Dorsolateral prefrontal cortex (tissue), 120 donors: ENCODE measurements at regions of chr21 and their contacts with region 1.

Region 1: GRCh38 chr21:33542640-33543504 is at the start of gene SON:
- DNase-seq: peak; percentile 99 to 100 (median 99)
- H3K4me3 ChIP-seq: peak within 1 kb of the TSS; percentile 63 to 95 (median 85)
- H3K27ac ChIP-seq: peak within 1 kb of the TSS; percentile 97 to 100 (median 100)
- H3K27me3 ChIP-seq: no peaks in the 10 kb centered on the region
- CTCF ChIP-seq: peak in 12 of 56 donors; percentile 3 to 29 (median 14)
- total RNA-seq, gene SON: 177 to 330 (median 263) TPM

Region 2: GRCh38 chr21:33380483-33380998 is 162.3 kb before region 1 on chr21:
- intact Hi-C with region 1: no loop called
- DNase-seq: peak; percentile 52 to 94 (median 84)
- H3K4me3 ChIP-seq: peak overlapping the region in 7 of 59 donors; percentile 1 to 18 (median 11)
- H3K27ac ChIP-seq: peak overlapping the region in 37 of 59 donors; percentile 4 to 85 (median 49)
- H3K27me3 ChIP-seq: no peaks in the 10 kb centered on the region
- CTCF ChIP-seq: no peak

Region 3: DNA sequence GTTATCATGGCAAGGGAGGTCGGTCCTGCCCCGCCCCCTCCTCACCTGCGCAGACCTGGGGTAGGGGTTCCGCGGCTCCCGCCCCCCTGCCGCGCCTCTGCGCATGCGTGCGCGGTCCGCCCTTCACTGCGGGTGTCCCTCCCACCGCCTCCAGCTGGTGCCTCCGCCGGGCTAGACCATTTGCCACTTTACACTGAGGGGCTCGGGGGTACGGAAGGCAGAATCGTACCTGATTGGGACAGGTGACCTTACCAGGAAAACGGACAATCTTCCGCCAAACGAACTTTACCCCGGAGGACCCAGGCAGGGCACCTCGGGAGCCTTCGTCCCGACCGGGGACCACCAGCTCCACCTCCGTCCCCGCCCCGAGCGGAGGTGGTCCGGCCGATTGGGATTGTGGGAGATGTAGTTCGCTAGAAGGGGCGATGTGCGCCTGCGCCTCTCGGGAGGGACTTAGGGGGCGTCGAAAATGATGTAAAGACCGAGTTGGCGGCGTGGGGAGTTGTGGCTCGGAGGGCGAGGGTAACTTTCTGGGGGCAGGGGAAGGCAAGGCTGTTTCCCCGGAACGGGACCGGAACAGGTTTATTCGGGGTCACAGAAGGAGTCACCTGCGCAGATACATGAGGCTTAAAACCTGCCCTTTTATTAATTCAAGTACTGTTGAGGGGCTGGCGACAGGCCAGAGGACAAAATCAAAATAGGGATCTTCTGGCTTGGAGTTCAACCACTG is 51.3 kb before region 1 on chr21 and contains the start of gene DNAJC28:
- intact Hi-C with region 1: loop called (anchors 2 to 5 kb)
- DNase-seq: peak; percentile 90 to 96 (median 92)
- H3K4me3 ChIP-seq: peak within 1 kb of the TSS; percentile 59 to 98 (median 79)
- H3K27ac ChIP-seq: peak within 1 kb of the TSS; percentile 66 to 98 (median 89)
- H3K27me3 ChIP-seq: no peaks in the 10 kb centered on the region
- CTCF ChIP-seq: peak in 16 of 56 donors; percentile 7 to 37 (median 24)
- total RNA-seq, gene DNAJC28: 3.5 to 15.7 (median 8.5) TPM

Region 4: GRCh38 chr21:33588485-33589335 is 45.8 kb after region 1 on chr21 and contains the start of gene DONSON:
- intact Hi-C with region 1: loop called (anchors 1 to 2 kb)
- DNase-seq: peak; percentile 51 to 94 (median 79)
- H3K4me3 ChIP-seq: peak within 1 kb of the TSS; percentile 58 to 97 (median 85)
- H3K27ac ChIP-seq: peak within 1 kb of the TSS; percentile 4 to 92 (median 82)
- H3K27me3 ChIP-seq: no peaks in the 10 kb centered on the region
- CTCF ChIP-seq: peak in 25 of 56 donors; percentile 4 to 44 (median 29)
- total RNA-seq, gene DONSON: 7.4 to 30.1 (median 16.4) TPM

Region 5: DNA sequence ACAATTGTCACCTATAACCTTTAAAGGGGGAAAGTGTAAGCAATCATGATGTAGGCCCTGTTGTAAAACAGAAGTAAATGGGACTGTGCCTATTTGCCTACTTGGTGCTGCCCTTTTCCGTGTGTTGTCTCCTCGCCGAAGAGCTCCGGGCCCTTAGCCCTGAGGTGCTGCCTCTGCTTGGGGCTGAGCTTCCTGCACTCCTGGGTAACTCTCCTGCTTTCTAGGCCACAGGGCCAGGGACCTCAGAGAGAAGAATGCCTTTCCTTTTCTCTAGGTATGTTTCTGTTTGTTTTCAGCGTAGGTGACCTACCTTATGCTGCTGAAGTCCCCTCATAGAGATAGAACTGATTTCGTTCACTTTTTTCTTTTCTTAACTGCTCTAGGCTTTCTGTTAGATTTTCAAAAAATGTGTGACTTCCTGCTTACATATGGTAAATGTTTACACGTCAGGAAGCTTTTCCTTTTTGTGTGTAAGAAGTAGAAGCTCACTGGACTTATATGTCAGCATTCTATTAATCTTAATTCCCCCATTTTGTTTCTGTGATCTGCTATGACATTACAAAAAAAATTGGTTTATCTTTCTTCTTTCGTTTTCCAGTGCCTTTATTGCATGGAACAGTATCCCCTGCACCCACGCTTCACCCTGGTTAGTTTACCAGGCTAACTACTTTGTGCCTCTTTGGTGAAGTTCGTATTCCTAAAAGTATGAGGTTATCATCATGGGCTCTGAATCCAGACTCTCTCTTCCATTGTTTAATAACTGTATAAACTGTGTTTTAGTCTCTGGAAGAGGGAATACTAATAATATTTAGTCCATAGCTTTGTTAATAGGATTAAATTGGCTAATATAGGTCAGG is 161.1 kb after region 1 on chr21:
- intact Hi-C with region 1: no loop called
- DNase-seq: no peak
- H3K4me3 ChIP-seq: peak overlapping the region in 3 of 59 donors; percentile 0 to 12 (median 4)
- H3K27ac ChIP-seq: peak overlapping the region in 4 of 59 donors; percentile 11 to 25 (median 16)
- H3K27me3 ChIP-seq: no peaks in the 10 kb centered on the region
- CTCF ChIP-seq: no peak

Region 6: GRCh38 chr21:33947451-33948095 is 404.7 kb after region 1 on chr21:
- intact Hi-C with region 1: no loop called
- DNase-seq: peak in 9 of 10 donors; percentile 59 to 88 (median 75)
- H3K4me3 ChIP-seq: peak overlapping the region in 50 of 59 donors; percentile 1 to 51 (median 23)
- H3K27ac ChIP-seq: peak overlapping the region in 58 of 59 donors; percentile 28 to 97 (median 88)
- H3K27me3 ChIP-seq: no peaks in the 10 kb centered on the region
- CTCF ChIP-seq: no peak